ENCODE measurements at regions of chr14 and their contacts with region 1.

Region 1: GRCh38 chr14:58199726-58200479 is at the start of gene ACTR10:
- DNase-seq: peak; percentile 88 to 89
- ATAC-seq: peak; percentile 97 to 99 (median 97)
- H3K4me3 ChIP-seq: peak within 1 kb of the TSS; percentile 66 to 98 (median 90)
- H3K27ac ChIP-seq: peak within 1 kb of the TSS; percentile 90 to 99 (median 96)
- H3K4me1 ChIP-seq: peaks cover 0 to 26% (median 17%) of the 10 kb centered on the region in 9 donors
- H3K27me3 ChIP-seq: no peaks in the 10 kb centered on the region
- CTCF ChIP-seq: no peak
- total RNA-seq, gene ACTR10: 60.5 to 83.2 (median 72.8) TPM

Region 2: GRCh38 chr14:57461777-57462320 is 738.1 kb before region 1 on chr14:
- intact Hi-C with region 1: no loop called
- DNase-seq: no peak
- ATAC-seq: no peak
- H3K4me3 ChIP-seq: no peak overlapping the region
- H3K27ac ChIP-seq: no peak overlapping the region
- H3K4me1 ChIP-seq: no peaks in the 10 kb centered on the region
- H3K27me3 ChIP-seq: no peaks in the 10 kb centered on the region
- CTCF ChIP-seq: no peak

Region 3: DNA sequence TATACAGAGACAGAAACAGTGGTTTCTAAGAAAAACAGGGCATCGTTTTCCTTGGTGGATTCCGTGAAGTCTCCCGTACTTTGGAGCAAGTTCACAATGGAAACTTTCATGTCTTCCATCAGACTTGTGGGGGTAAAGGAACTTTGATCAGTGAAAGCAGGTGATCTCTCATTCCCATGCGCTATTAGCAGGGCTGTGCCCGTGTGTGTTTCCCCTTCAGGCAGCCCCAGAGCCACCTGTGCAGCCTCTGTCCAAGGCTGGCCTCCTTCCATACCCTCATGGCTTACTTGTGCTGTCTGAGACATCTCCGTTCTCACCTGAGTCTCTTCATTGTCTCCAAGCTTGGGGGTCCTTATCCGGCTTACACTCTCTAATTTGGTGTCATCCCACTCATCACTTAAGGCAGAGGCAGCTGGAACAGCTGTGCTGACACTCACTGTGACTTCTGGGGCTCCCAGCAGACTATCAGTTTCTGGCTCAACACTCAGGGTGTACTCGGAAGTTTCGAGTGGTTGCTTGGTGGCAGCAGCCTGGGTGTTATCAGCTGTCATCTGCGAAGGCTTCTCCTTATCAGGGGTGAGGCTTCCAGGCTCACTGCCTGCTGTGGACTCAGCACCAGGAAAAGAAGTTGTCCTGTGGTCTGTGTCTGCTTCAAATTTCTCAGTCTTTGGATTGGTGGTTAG is 61.7 kb before region 1 on chr14:
- intact Hi-C with region 1: no loop called
- DNase-seq: no peak
- ATAC-seq: peak in 1 of 8 donors; percentile 27
- H3K4me3 ChIP-seq: no peak overlapping the region
- H3K27ac ChIP-seq: no peak overlapping the region
- H3K4me1 ChIP-seq: peaks cover 0 to 7% (median 0%) of the 10 kb centered on the region in 9 donors
- H3K27me3 ChIP-seq: no peaks in the 10 kb centered on the region
- CTCF ChIP-seq: no peak

Region 4: GRCh38 chr14:58239244-58240195 is 39.6 kb after region 1 on chr14:
- intact Hi-C with region 1: loop called in 3 of 10 experiments (anchors 1 to 5 kb)
- DNase-seq: peak; percentile 69 to 70
- ATAC-seq: peak; percentile 38 to 63 (median 52)
- H3K4me3 ChIP-seq: peak overlapping the region; percentile 33 to 76 (median 61)
- H3K27ac ChIP-seq: peak overlapping the region; percentile 2 to 81 (median 75)
- H3K4me1 ChIP-seq: peaks cover 0 to 21% (median 7%) of the 10 kb centered on the region in 9 donors
- H3K27me3 ChIP-seq: no peaks in the 10 kb centered on the region
- CTCF ChIP-seq: no peak

Region 5: GRCh38 chr14:58244556-58245387 is 44.9 kb after region 1 on chr14 and contains the start of gene PSMA3:
- intact Hi-C with region 1: loop called in 3 of 10 experiments (anchors 1 to 5 kb)
- DNase-seq: peak; percentile 97 to 98
- ATAC-seq: peak; percentile 94 to 99 (median 96)
- H3K4me3 ChIP-seq: peak within 1 kb of the TSS; percentile 60 to 95 (median 82)
- H3K27ac ChIP-seq: peak within 1 kb of the TSS; percentile 89 to 98 (median 94)
- H3K4me1 ChIP-seq: peaks cover 7 to 45% (median 34%) of the 10 kb centered on the region in 9 donors
- H3K27me3 ChIP-seq: no peaks in the 10 kb centered on the region
- CTCF ChIP-seq: peak in 2 of 9 donors; percentile 25 to 30
- total RNA-seq, gene PSMA3: 122 to 235 (median 150) TPM

Region 6: GRCh38 chr14:58297762-58298476 is 98.0 kb after region 1 on chr14:
- intact Hi-C with region 1: loop called in 1 of 10 experiments (anchors 1 kb)
- DNase-seq: peak; percentile 98 to 99
- ATAC-seq: peak; percentile 93 to 98 (median 97)
- H3K4me3 ChIP-seq: peak overlapping the region; percentile 85 to 99 (median 94)
- H3K27ac ChIP-seq: peak overlapping the region; percentile 84 to 98 (median 96)
- H3K4me1 ChIP-seq: peaks cover 4 to 66% (median 53%) of the 10 kb centered on the region in 9 donors
- H3K27me3 ChIP-seq: no peaks in the 10 kb centered on the region
- CTCF ChIP-seq: peak in 2 of 9 donors; percentile 25 to 36

Region 7: GRCh38 chr14:58376791-58377190 is 176.9 kb after region 1 on chr14:
- intact Hi-C with region 1: loop called in 1 of 10 experiments (anchors 10 kb)
- DNase-seq: no peak
- ATAC-seq: no peak
- H3K4me3 ChIP-seq: no peak overlapping the region
- H3K27ac ChIP-seq: no peak overlapping the region
- H3K4me1 ChIP-seq: no peaks in the 10 kb centered on the region
- H3K27me3 ChIP-seq: no peaks in the 10 kb centered on the region
- CTCF ChIP-seq: no peak